GM10248 (cell line): ENCODE measurements at regions of chr14 and their contacts with region 1.

Region 1: DNA sequence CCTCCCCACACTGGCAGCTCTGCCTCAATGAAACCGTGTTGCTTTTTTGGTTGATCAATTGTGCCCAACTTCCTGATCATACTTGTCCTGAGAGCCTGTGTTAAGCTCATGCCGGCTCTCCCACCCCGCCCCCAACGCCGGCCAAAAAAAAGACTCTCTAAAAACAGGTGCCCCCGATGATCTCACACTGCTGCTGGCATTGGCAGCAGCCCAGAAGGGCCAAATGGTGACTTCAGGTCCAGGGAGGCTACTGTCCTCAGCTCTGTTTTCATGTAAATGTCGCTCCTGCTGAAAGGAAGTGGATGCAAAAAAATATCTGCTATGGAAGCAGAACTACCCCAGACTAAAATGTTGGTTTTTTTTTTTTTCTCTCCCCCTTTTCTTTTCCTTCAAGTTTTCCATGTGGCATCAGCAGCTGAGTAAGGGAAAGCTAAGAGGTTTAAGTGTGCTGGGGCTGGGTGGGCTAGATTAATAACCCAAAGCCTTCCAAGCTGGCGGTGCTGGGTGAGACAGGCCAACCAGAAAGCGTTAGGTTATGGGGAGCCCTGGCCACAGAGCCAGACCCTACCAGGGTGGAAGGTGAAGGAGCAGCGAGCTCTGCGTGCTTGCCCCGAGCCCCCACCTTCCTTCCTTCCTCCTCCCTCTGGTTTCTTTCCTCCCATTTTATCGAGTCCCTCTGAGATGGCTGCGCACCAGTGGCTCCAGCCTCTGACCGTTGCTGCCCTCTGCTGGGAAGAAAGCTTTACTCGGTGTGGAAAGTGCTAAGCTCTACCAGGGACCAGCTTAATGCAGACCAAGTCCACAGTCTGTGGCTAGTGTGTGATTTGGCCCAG is 396.1 kb downstream of the NRXN3 start:
- DNase-seq: peak; percentile 63
- CTCF ChIP-seq: peak; percentile 84

Region 2: DNA sequence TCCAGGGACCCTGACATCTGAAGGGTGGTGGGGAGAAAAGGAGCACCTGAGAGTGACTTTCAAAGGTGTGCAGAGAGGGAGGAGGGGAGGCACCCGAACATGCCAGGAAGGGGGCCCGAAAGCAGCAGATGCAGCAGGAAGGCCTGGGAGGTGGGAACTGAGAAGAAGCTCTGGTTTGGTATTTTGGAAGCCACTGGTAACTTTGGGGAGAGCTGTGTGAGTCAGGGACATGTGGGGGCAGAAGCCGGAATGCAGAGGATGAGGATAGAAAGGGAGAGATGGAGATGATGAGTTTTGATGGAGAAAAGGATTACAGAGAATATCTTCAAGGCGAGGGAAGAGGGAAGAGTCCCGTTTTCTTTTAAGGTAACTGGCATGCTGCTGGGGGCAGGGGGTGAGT is 346.0 kb before region 1 on chr14:
- CTCF ChIA-PET with region 1: no interaction called
- POLR2A ChIA-PET with region 1: no interaction called
- DNase-seq: no peak
- CTCF ChIP-seq: no peak

Region 3: GRCh38 chr14:78448164-78449094 is 117.8 kb before region 1 on chr14:
- CTCF ChIA-PET with region 1: interaction called, 25 read pairs
- POLR2A ChIA-PET with region 1: no interaction called
- DNase-seq: peak; percentile 67
- CTCF ChIP-seq: peak; percentile 66

Region 4: DNA sequence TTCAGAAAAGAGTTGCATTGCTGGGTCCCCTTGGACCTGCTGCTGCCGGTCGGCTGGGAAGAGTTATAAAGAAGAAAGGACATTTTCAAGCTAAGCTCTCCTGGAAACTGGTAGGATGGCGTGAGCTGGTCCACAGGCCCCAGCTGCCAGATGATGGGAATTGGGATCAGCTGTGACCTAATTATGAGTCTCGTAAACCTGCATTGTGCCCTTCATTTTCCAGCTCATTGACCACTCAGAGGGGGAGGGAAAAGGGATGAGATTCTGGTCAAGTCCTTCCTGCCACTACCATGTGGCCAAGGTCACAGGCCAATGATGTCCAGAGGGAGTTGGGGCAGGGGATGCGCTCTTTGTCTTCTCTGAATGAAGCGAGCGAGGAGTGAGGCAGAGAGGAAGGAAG is 75.2 kb before region 1 on chr14:
- CTCF ChIA-PET with region 1: interaction called, 10 read pairs
- POLR2A ChIA-PET with region 1: no interaction called
- DNase-seq: no peak
- CTCF ChIP-seq: no peak

Region 5: DNA sequence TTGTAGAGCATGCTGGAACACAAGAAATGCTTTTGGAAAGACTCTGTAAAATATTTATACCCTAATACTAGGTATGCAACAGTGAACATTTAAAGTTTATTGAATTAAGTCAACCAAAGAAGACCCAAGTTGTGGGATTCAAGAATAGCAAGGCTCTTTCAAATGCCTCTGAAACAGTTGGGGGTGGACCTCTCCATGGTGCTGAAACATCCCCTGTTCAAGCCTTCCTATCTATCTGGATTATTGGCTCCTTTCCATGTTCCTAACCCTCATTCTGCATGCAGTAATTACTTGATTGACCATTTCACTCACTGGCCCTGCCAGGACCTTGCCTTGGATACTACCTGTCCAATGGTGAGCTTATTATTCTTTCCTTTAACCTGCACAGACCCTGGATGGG is 46.4 kb before region 1 on chr14:
- CTCF ChIA-PET with region 1: no interaction called
- POLR2A ChIA-PET with region 1: no interaction called
- DNase-seq: peak; percentile 26
- CTCF ChIP-seq: no peak

Region 6: DNA sequence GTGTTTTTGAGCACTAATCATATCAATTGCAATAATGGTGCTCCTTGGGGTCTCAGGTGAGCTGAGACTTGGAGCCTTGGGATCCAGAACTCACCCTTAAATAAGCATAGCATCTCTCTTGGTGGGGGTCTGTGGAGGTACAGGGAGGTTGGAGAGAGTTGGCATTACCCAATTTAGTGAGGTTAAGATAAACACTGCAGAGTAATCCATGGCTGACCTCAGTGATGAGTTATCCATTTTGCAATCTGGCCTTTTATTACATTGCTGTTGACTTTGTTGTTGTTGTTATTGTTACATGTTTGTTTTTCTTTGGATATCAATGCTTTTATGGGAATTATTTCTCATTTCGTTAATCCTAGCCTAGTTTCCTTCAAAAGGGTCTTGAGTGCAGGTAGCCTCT is 22.8 kb before region 1 on chr14:
- CTCF ChIA-PET with region 1: interaction called, 12 read pairs
- POLR2A ChIA-PET with region 1: no interaction called
- DNase-seq: no peak
- CTCF ChIP-seq: no peak

Region 7: GRCh38 chr14:78581229-78581628 is 15.0 kb after region 1 on chr14:
- CTCF ChIA-PET with region 1: interaction called, 84 read pairs
- POLR2A ChIA-PET with region 1: no interaction called
- DNase-seq: no peak
- CTCF ChIP-seq: no peak

Region 8: DNA sequence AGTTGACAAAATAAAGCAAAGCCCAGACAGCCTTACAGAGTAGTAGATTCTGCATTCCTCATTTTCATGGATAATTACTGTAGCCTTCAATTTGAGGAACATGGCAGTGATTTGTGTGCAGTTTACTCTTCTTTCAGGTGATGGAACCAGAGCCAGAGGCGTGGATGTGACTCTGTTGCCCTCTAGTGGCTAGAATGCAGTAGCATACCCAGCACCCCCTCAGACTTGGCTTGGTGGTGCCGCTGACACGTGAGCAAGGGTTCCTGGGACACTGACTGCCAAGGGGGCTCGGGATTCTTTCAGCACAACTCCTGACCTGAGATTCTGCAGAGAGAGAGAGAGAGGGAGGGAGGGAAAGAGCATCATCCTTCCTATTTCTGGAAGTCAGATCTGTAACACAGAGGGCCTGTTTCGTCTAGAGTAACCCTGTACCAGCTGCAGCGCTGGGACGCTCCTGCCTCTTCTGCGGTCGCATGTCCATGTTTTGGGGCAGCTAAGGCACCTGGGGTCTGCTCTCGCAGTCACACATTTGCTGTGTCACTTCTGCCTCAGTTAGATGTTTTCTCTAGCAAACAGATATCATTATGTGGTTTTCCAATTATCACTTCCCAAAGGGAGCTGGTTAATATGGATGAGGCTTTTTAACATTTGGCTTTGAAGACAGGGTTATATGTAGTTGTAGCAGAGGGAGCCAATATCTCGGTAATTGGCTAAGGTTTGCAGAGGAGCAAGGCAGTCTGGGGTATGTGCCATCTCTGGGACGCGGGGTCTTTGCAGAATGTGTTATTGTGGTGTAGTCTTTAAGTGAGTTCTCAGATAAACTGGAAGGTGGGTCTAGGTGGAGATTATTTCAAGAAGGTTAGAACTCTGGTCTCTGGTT is 32.0 kb after region 1 on chr14:
- CTCF ChIA-PET with region 1: interaction called, 31 read pairs
- POLR2A ChIA-PET with region 1: no interaction called
- DNase-seq: peak; percentile 64
- CTCF ChIP-seq: peak; percentile 89